ENCODE measurements at regions of chr7 and their contacts with region 1.

Region 1: DNA sequence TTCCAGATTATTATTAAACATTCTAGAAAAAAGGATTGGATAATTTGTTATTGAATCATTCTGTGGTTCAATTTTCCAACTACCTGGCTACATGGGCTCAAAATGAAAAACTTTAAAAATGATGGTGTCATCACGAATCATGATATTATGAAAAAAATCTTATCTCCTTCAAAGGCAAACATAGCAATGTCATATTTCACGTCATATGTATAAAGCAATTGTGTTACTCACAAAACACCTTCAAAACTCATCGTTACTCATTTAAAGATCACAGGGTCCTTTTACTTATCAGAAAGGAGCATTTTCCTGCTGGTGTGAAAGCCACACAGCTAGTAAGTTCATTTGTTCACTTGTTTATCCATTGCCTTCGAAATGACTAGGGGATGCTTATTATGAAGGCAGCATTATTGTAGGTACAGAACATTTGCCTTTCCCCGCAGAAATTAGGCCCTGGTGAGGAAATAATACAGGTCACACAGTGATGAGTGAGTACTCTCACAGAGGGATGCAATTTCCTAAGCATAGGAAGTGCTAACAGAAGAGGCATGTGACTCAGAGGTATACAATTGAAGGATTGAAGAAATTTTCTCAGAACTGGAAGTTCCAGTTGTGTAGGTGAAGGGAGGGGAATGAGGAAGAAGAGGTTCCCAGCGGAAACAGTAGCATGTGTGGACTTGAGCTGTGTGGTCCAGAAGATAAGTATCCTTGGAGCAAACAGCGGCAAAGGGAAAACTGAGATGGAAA is 478.7 kb downstream of the INHBA start:
- DNase-seq: peak; percentile 70
- H3K4me3 Mint-ChIP-seq: no peak overlapping the region
- H3K27ac Mint-ChIP-seq: no peak overlapping the region
- H3K4me1 Mint-ChIP-seq: peaks cover 13% of the 10 kb centered on the region
- H3K27me3 Mint-ChIP-seq: no peaks in the 10 kb centered on the region
- CTCF ChIP-seq: no peak

Region 2: GRCh38 chr7:41189866-41190265 is 34.4 kb before region 1 on chr7:
- CTCF ChIA-PET with region 1: interaction called, 3 read pairs
- intact Hi-C with region 1: loop called (anchors 1 kb)
- DNase-seq: peak; percentile 54
- H3K4me3 Mint-ChIP-seq: no peak overlapping the region
- H3K27ac Mint-ChIP-seq: peak overlapping the region; percentile 95
- H3K4me1 Mint-ChIP-seq: peaks cover 49% of the 10 kb centered on the region
- H3K27me3 Mint-ChIP-seq: no peaks in the 10 kb centered on the region
- CTCF ChIP-seq: no peak

Region 3: GRCh38 chr7:41238851-41239331 is 14.7 kb after region 1 on chr7:
- CTCF ChIA-PET with region 1: interaction called, 11 read pairs
- intact Hi-C with region 1: no loop called
- DNase-seq: no peak
- H3K4me3 Mint-ChIP-seq: no peak overlapping the region
- H3K27ac Mint-ChIP-seq: no peak overlapping the region
- H3K4me1 Mint-ChIP-seq: peaks cover 37% of the 10 kb centered on the region
- H3K27me3 Mint-ChIP-seq: no peaks in the 10 kb centered on the region
- CTCF ChIP-seq: no peak

Region 4: DNA sequence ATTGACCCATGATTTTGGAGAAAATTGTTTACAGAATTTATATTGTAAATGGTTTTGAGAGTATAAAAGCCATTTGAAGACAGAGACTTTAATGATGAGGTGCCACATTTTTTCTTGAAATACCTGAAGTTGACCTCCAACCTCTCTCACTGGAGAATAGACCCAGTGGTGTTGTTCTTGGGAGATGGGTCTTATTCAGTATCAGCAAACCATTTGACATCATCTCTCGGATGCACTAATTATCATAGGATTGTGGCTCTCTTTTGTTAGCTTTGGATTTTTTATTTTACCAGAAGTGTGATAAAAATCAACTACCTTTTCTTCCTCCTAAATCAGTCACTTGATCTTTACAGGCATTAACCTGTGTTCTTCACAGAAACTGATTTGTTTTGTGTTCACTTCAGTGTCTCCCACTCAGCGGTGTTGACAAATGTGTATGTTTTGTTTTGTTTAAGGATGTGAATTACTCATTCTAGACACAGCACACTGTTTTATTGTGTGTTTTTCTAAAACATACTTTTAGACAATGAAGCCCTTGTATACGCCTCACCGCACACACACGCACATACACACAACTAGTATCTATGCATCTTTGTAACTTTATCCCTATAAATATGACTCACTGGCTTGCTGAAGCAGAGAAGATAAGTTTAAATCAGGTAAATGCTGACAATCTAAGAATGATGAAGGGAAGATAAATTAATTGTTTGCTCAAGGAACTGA is 23.1 kb after region 1 on chr7:
- CTCF ChIA-PET with region 1: no interaction called
- intact Hi-C with region 1: loop called (anchors 2 kb)
- DNase-seq: peak; percentile 69
- H3K4me3 Mint-ChIP-seq: peak overlapping the region; percentile 22
- H3K27ac Mint-ChIP-seq: peak overlapping the region; percentile 96
- H3K4me1 Mint-ChIP-seq: peaks cover 42% of the 10 kb centered on the region
- H3K27me3 Mint-ChIP-seq: no peaks in the 10 kb centered on the region
- CTCF ChIP-seq: no peak

Region 5: DNA sequence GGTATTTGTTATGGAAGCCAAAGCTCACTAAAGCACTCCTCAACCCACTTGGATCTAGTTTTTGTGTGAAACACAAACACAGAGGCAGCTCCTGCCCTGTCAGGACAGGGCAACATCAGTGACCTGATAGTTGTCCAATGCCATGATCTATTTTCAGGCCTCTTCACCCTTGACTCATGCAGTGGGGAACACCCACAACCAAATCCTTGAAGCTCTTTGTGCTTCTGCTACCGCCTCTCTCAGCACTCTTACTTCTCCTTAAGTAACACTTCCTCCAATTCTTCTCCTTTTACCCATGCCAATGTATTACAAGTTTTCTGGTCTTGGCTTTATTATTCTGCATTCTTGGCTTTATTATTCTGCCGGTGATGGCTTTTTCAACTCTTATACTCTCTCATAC is 53.3 kb after region 1 on chr7:
- CTCF ChIA-PET with region 1: no interaction called
- intact Hi-C with region 1: no loop called
- DNase-seq: no peak
- H3K4me3 Mint-ChIP-seq: no peak overlapping the region
- H3K27ac Mint-ChIP-seq: no peak overlapping the region
- H3K4me1 Mint-ChIP-seq: no peaks in the 10 kb centered on the region
- H3K27me3 Mint-ChIP-seq: no peaks in the 10 kb centered on the region
- CTCF ChIP-seq: no peak